ENCODE measurements at regions of chr22 and their contacts with region 1.

Region 1: GRCh38 chr22:45268958-45269844 is 15.5 kb upstream of the UPK3A start:
- DNase-seq: peak; percentile 84 to 94 (median 92)
- H3K4me3 ChIP-seq: peak overlapping the region; percentile 53
- H3K27ac ChIP-seq: no peak overlapping the region
- H3K4me1 ChIP-seq: no peaks in the 10 kb centered on the region
- H3K27me3 ChIP-seq: no peaks in the 10 kb centered on the region
- CTCF ChIP-seq: peak; percentile 78 to 92 (median 91)
- EP300 ChIP-seq: no peak
- POLR2A ChIP-seq: no peak

Region 2: GRCh38 chr22:44931077-44931540 is 338.1 kb before region 1 on chr22:
- intact Hi-C with region 1: no loop called
- DNase-seq: peak; percentile 70 to 91 (median 85)
- H3K4me3 ChIP-seq: no peak overlapping the region
- H3K27ac ChIP-seq: no peak overlapping the region
- H3K4me1 ChIP-seq: peaks cover 11% of the 10 kb centered on the region
- H3K27me3 ChIP-seq: no peaks in the 10 kb centered on the region
- CTCF ChIP-seq: no peak
- EP300 ChIP-seq: no peak
- POLR2A ChIP-seq: no peak

Region 3: GRCh38 chr22:45101515-45102227 is 167.5 kb before region 1 on chr22:
- intact Hi-C with region 1: loop called in 1 of 4 experiments (anchors 10 kb)
- DNase-seq: peak; percentile 23 to 52 (median 40)
- H3K4me3 ChIP-seq: no peak overlapping the region
- H3K27ac ChIP-seq: no peak overlapping the region
- H3K4me1 ChIP-seq: no peaks in the 10 kb centered on the region
- H3K27me3 ChIP-seq: no peaks in the 10 kb centered on the region
- CTCF ChIP-seq: no peak
- EP300 ChIP-seq: no peak
- POLR2A ChIP-seq: no peak

Region 4: GRCh38 chr22:45309472-45310227 is 40.4 kb after region 1 on chr22 and contains the start of gene FAM118A:
- intact Hi-C with region 1: no loop called
- DNase-seq: peak; percentile 90 to 99 (median 96)
- H3K4me3 ChIP-seq: peak within 1 kb of the TSS; percentile 72
- H3K27ac ChIP-seq: peak within 1 kb of the TSS in 1 of 2 donors; percentile 38
- H3K4me1 ChIP-seq: peaks cover 5% of the 10 kb centered on the region
- H3K27me3 ChIP-seq: no peaks in the 10 kb centered on the region
- CTCF ChIP-seq: peak in 1 of 3 donors; percentile 19
- EP300 ChIP-seq: no peak
- POLR2A ChIP-seq: peak; percentile 74
- total RNA-seq, gene FAM118A: 21.9 to 50.4 (median 30.0) TPM

Region 5: GRCh38 chr22:45429981-45430775 is 161.0 kb after region 1 on chr22:
- intact Hi-C with region 1: loop called (anchors 1 to 5 kb)
- DNase-seq: peak in 2 of 5 donors; percentile 9 to 17
- H3K4me3 ChIP-seq: no peak overlapping the region
- H3K27ac ChIP-seq: no peak overlapping the region
- H3K4me1 ChIP-seq: no peaks in the 10 kb centered on the region
- H3K27me3 ChIP-seq: no peaks in the 10 kb centered on the region
- CTCF ChIP-seq: no peak
- EP300 ChIP-seq: no peak
- POLR2A ChIP-seq: no peak

Region 6: DNA sequence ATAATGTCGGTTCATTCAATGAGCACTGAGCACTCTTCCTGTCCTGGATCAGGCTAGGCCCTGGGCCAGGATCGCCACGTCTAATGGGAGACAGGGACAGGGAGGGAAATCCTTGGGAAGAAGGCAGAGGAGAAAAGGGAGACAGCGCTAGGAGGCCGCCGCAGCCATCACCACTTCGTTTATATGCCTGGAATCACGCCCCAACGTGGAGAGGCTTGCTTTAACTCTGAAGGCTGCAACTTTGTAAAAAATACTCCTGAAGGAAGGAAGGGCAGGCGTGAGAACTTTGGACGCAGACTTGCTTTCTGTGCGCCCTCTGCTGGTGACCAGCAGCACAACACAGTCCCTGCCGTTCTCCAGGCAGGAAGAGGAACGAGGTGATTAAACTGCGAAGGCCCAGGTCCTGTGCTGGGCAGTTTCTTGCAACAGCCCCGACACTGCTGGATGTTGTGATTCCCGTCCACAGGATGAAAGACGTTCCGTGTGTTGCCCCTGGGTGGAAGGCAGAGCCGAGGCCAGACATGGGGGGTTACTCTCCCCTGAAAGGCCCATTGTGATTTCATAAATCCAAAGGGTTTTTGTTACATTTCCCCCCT is 166.4 kb after region 1 on chr22:
- intact Hi-C with region 1: loop called (anchors 1 to 5 kb)
- DNase-seq: peak; percentile 85 to 94 (median 90)
- H3K4me3 ChIP-seq: no peak overlapping the region
- H3K27ac ChIP-seq: peak overlapping the region in 1 of 2 donors; percentile 61
- H3K4me1 ChIP-seq: no peaks in the 10 kb centered on the region
- H3K27me3 ChIP-seq: no peaks in the 10 kb centered on the region
- CTCF ChIP-seq: peak; percentile 94 to 95 (median 94)
- EP300 ChIP-seq: no peak
- POLR2A ChIP-seq: peak; percentile 25

Measured in ovary (tissue), 10 donors.